CD14-positive monocyte (primary cell): ENCODE measurements at regions of chr1 and their contacts with region 1.

Region 1: GRCh38 chr1:32215629-32216480 is 6.3 kb downstream of the TMEM234 start:
- DNase-seq: peak in 2 of 3 donors; percentile 46 to 50
- H3K4me3 ChIP-seq: no peak overlapping the region
- H3K4me3 Mint-ChIP-seq: no peak overlapping the region
- H3K27ac ChIP-seq: peak overlapping the region in 1 of 2 donors; percentile 49
- H3K27ac Mint-ChIP-seq: peak overlapping the region in 6 of 7 donors; percentile 19 to 84 (median 72)
- H3K4me1 ChIP-seq: peaks cover 6 to 13% of the 10 kb centered on the region in 2 donors
- H3K4me1 Mint-ChIP-seq: peaks cover 13% of the 10 kb centered on the region
- H3K27me3 ChIP-seq: no peaks in the 10 kb centered on the region
- H3K27me3 Mint-ChIP-seq: no peaks in the 10 kb centered on the region
- CTCF ChIP-seq: peak; percentile 91

Region 2: DNA sequence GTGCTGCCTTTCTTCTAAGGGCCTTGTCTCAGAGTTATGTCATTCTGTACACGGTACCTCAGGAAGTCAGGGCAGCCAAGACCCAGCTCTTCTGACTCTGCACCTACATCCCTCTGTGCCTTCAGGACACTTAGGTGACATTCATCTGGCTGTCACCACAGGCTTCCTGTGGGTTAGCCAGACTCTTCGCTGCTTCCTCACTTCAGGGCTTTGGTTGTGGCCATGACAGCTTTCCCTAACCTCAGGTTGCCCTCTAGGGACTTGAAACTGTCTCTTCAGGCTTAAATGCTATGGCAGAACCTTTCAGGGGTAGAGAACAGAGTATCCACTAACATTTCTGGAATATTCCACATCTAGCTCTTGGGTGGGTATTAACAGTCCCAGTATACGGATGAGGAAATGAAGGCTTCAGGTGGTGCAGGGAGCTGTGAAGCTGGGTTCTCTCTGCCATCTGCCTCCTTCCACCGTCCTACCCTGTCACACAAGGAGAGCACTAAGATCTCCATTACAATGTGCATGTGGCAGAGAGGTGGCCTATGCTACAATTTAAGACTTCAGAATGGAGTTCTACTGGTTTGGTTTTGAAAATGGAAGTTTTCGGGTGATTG is 156.4 kb after region 1 on chr1:
- intact Hi-C with region 1: loop called in 1 of 2 experiments (anchors 10 kb)
- DNase-seq: peak; percentile 44 to 62 (median 54)
- H3K4me3 ChIP-seq: no peak overlapping the region
- H3K4me3 Mint-ChIP-seq: no peak overlapping the region
- H3K27ac ChIP-seq: no peak overlapping the region
- H3K27ac Mint-ChIP-seq: peak overlapping the region in 2 of 7 donors; percentile 5 to 33
- H3K4me1 ChIP-seq: no peaks in the 10 kb centered on the region
- H3K4me1 Mint-ChIP-seq: peaks cover 3% of the 10 kb centered on the region
- H3K27me3 ChIP-seq: no peaks in the 10 kb centered on the region
- H3K27me3 Mint-ChIP-seq: peaks cover 0 to 3% (median 1%) of the 10 kb centered on the region in 3 donors
- CTCF ChIP-seq: peak; percentile 44

Region 3: DNA sequence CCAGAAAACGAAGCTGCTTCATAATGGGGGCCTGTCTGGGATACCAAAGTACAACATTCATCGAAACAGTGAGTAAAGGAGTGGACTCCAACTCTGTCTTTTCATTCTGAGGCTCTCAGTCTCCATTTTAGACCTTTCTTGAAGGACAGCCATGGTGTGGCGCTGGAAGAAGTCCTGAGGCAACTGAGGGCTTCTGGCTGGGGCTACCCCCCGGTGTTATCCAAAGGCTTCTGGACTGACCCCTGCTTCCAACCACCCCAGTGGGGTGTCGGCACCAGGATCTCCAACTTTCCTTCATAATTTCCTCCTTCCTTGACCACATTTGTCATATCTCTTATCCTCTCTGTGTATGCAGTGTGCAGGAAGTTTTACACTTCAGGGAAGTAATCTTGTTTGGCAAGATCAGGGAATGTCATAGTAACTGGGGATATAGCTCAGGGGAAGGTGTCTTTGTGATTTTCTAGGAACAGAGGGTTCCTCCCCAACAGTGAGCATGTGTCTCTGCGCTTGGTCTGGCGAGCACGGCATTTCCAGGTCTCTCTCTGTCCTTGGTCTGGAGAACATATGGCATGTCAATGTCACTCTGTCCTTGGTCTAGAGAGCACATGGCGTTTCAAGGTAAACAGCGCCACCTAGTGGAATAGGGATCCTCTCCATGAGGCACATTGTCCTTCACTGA is 197.8 kb after region 1 on chr1:
- intact Hi-C with region 1: loop called in 1 of 2 experiments (anchors 5 kb)
- DNase-seq: peak; percentile 54 to 78 (median 74)
- H3K4me3 ChIP-seq: no peak overlapping the region
- H3K4me3 Mint-ChIP-seq: no peak overlapping the region
- H3K27ac ChIP-seq: no peak overlapping the region
- H3K27ac Mint-ChIP-seq: peak overlapping the region in 1 of 7 donors; percentile 16
- H3K4me1 ChIP-seq: no peaks in the 10 kb centered on the region
- H3K4me1 Mint-ChIP-seq: no peaks in the 10 kb centered on the region
- H3K27me3 ChIP-seq: peaks cover 4 to 6% of the 10 kb centered on the region in 2 donors
- H3K27me3 Mint-ChIP-seq: peaks cover 2 to 15% (median 8%) of the 10 kb centered on the region in 3 donors
- CTCF ChIP-seq: peak; percentile 85